Activated CD4-positive, alpha-beta T cell treated with anti-CD3 and anti-CD28 coated beads for 36 hours (primary cell): ENCODE measurements at regions of chr5 and their contacts with region 1.

Region 1: DNA sequence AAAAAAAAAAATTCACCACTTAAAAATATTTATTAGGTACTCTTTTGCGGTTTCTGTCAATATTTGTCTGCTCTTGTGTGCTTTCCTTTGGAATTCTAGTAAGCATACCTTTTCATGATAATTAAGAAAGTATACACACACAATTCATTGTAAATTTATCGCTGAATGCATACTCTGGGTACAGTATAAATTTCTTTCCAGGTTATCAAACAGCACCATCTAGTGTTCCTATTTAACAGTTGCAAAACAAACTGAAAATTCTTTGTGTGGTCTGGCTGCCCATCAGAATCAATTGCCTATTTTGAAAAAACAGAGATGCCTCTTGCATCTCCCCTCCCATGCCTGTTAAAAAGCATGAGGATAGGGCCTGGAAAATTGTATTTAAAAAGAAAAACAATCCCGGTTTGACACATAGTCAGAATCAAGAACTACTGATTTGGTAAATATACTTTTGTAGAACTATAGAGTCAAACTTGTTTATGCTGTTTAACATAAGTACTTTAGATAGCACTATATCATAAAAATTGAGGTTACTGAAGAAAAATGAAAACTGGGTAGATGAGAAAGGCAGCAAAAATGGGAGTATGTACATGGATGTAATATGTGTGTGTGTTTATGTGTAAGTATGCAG is 16.2 kb downstream of the PGGT1B start:
- DNase-seq: no peak
- ATAC-seq: no peak
- H3K4me3 Mint-ChIP-seq: no peak overlapping the region
- H3K27ac Mint-ChIP-seq: no peak overlapping the region
- H3K4me1 Mint-ChIP-seq: peaks cover 21% of the 10 kb centered on the region
- H3K27me3 Mint-ChIP-seq: no peaks in the 10 kb centered on the region

Region 2: DNA sequence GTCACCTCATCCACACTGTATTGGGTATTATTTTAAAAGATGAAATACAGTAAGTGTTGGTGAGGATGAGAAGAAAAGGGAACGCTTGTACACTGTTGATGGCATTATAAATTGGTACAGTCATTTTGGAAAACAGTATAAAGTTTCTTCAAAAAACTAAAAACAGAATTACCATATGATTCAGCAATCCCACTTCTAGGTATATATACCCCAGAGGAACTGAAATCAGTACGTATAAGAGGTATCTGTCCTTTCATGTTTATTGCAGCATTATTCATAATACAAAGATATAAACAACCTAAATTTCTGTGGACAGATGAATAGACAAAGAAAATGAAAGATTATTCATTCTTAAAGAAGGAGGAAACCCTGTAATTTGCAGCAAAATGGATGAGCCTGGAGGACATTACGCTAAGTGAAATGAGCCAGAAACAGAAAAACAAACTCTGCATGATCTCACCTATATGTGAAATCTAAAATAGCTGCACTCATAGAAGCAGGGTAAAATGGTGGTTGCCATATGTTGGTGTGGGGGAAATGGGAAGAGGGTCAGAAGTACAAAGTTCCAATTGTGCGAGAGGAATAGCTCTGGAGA is 268.4 kb before region 1 on chr5:
- CTCF ChIA-PET with region 1: no interaction called
- POLR2A ChIA-PET with region 1: no interaction called
- intact Hi-C with region 1: loop called in 1 of 2 experiments (anchors 10 kb)
- DNase-seq: no peak
- ATAC-seq: peak; percentile 42
- H3K4me3 Mint-ChIP-seq: no peak overlapping the region
- H3K27ac Mint-ChIP-seq: no peak overlapping the region
- H3K4me1 Mint-ChIP-seq: no peaks in the 10 kb centered on the region
- H3K27me3 Mint-ChIP-seq: peaks cover 5% of the 10 kb centered on the region

Region 3: DNA sequence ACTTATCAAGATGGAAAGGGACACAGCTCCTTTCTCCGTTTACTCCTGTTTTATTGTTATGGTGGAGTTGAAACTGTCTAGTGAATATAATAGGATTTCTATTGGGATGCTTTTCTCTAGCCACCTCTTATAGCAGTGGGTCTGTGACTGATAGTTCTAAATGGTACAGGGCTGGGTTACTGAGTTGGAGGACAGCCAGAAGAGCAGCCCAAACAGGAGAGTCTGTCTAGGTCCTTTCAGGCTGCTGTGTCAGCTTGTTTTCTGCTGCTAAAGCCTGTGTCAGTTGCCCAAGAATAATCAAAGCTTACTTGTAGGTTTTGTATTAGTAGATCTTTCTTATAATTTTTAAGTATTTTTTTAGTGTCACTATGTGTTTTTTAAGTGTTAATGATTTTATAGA is 1684.1 kb after region 1 on chr5:
- CTCF ChIA-PET with region 1: no interaction called
- POLR2A ChIA-PET with region 1: no interaction called
- intact Hi-C with region 1: no loop called
- DNase-seq: no peak
- ATAC-seq: no peak
- H3K4me3 Mint-ChIP-seq: no peak overlapping the region
- H3K27ac Mint-ChIP-seq: no peak overlapping the region
- H3K4me1 Mint-ChIP-seq: no peaks in the 10 kb centered on the region
- H3K27me3 Mint-ChIP-seq: no peaks in the 10 kb centered on the region